CD14-positive monocyte (primary cell): ENCODE measurements at regions of chr20 and their contacts with region 1.

Region 1: DNA sequence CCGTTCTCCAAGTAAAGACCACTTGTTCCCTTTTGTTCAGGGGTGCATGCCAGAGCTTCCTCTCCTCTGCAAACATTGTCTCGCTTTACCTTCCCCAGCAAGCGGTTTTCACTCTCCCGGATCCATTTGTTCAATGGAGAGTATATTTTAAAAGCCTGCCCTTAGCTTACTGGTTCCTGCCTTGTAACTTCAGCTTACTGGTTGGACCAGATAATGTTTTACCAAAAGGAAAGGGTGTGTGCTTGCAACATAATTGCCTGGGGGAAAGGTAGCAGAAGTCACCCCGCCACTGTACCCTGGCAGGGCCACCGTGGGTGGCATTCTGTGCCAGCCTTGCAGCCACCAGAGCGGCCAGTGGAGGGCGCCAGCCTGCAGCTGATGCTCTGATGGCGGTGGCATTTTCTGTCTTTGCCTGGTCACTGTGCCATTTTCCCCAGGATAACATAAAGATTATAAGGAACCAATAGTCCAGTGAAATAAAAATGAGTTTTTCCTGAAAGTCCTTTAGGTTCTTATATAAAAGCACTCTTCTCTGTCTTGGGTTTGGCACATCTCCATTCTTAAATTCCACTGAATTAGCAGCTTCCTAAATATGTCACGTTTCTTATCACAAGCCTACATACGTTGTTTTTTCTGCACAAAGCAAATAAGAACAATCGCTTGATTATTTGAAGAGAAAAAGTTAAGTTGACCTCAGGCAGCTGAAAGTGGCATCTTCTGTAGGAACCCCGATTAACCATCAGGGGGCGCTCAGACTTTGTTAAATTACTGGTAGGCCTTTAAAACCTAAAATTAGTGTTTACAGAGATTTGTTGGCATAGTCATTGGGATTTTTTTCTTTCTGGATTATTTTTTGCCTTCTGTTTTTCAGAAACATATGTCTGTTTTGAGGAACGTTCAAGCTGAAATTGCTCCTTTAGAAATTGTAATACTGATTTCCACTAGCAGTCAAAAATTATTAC is 67.4 kb upstream of the XRN2 start:
- DNase-seq: peak; percentile 40 to 66 (median 52)
- H3K4me3 ChIP-seq: no peak overlapping the region
- H3K4me3 Mint-ChIP-seq: no peak overlapping the region
- H3K27ac ChIP-seq: no peak overlapping the region
- H3K27ac Mint-ChIP-seq: no peak overlapping the region
- H3K4me1 ChIP-seq: peaks cover 0 to 4% of the 10 kb centered on the region in 2 donors
- H3K4me1 Mint-ChIP-seq: peaks cover 6% of the 10 kb centered on the region
- H3K27me3 ChIP-seq: no peaks in the 10 kb centered on the region
- H3K27me3 Mint-ChIP-seq: peaks cover 0 to 9% (median 4%) of the 10 kb centered on the region in 3 donors
- CTCF ChIP-seq: peak; percentile 99

Region 2: GRCh38 chr20:20860078-20860806 is 375.5 kb before region 1 on chr20:
- intact Hi-C with region 1: loop called in 1 of 2 experiments (anchors 10 kb)
- DNase-seq: peak; percentile 66 to 80 (median 78)
- H3K4me3 ChIP-seq: no peak overlapping the region
- H3K4me3 Mint-ChIP-seq: peak overlapping the region in 1 of 2 donors; percentile 4
- H3K27ac ChIP-seq: no peak overlapping the region
- H3K27ac Mint-ChIP-seq: no peak overlapping the region
- H3K4me1 ChIP-seq: peaks cover 8 to 9% of the 10 kb centered on the region in 2 donors
- H3K4me1 Mint-ChIP-seq: peaks cover 7% of the 10 kb centered on the region
- H3K27me3 ChIP-seq: peaks cover 0 to 3% of the 10 kb centered on the region in 2 donors
- H3K27me3 Mint-ChIP-seq: peaks cover 11 to 16% (median 13%) of the 10 kb centered on the region in 3 donors
- CTCF ChIP-seq: peak; percentile 96

Region 3: GRCh38 chr20:21251278-21251677 is 15.5 kb after region 1 on chr20:
- intact Hi-C with region 1: no loop called
- DNase-seq: no peak
- H3K4me3 ChIP-seq: no peak overlapping the region
- H3K4me3 Mint-ChIP-seq: no peak overlapping the region
- H3K27ac ChIP-seq: no peak overlapping the region
- H3K27ac Mint-ChIP-seq: peak overlapping the region in 1 of 7 donors; percentile 15
- H3K4me1 ChIP-seq: no peaks in the 10 kb centered on the region
- H3K4me1 Mint-ChIP-seq: peaks cover 3% of the 10 kb centered on the region
- H3K27me3 ChIP-seq: peaks cover 0 to 3% of the 10 kb centered on the region in 2 donors
- H3K27me3 Mint-ChIP-seq: peaks cover 4 to 10% (median 4%) of the 10 kb centered on the region in 3 donors
- CTCF ChIP-seq: no peak

Region 4: GRCh38 chr20:21262812-21263211 is 27.0 kb after region 1 on chr20:
- intact Hi-C with region 1: no loop called
- DNase-seq: no peak
- H3K4me3 ChIP-seq: no peak overlapping the region
- H3K4me3 Mint-ChIP-seq: no peak overlapping the region
- H3K27ac ChIP-seq: no peak overlapping the region
- H3K27ac Mint-ChIP-seq: no peak overlapping the region
- H3K4me1 ChIP-seq: no peaks in the 10 kb centered on the region
- H3K4me1 Mint-ChIP-seq: no peaks in the 10 kb centered on the region
- H3K27me3 ChIP-seq: no peaks in the 10 kb centered on the region
- H3K27me3 Mint-ChIP-seq: peaks cover 2 to 16% (median 5%) of the 10 kb centered on the region in 3 donors
- CTCF ChIP-seq: no peak

Region 5: DNA sequence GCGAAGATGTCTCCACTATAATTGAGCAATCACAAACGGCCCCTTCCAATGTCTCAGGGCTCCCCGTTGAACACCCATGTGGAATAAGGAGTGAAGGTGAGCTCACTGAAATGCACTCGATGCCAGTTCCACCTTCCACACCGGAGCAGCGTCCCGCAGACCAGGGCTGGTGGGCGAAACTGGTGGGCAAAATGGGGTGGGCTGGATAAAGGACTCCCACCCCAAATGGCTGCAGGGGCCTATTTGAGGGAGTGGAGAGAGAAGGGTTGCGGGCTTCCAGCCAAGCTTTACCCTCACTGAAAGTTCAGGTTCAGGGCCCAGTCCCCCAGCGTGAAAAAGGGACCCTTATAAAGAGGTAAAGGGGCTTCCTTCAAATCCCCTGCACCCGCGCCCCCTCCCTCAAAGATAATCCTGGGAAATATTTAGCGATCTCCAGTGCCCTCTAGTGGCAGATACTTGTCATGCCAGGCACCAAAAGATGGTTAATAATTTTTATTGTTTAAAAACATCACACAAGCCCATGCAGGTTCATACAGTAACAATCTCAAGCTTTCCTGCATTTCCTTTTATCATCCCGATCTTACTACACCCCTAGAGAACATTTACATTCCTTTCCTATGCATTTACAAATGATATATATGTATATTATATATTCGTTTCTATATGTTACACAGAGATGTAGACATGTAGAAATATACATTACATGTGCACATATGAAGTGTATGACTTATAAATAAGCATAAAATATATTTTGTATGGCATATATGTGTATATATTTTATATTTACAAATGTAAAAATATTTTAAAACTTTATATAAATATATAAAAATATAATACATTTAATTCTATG is 336.3 kb after region 1 on chr20:
- intact Hi-C with region 1: loop called in 1 of 2 experiments (anchors 5 kb)
- DNase-seq: peak in 2 of 3 donors; percentile 6
- H3K4me3 ChIP-seq: peak overlapping the region in 1 of 3 experiments; percentile 15
- H3K4me3 Mint-ChIP-seq: no peak overlapping the region
- H3K27ac ChIP-seq: no peak overlapping the region
- H3K27ac Mint-ChIP-seq: no peak overlapping the region
- H3K4me1 ChIP-seq: peaks cover 15 to 17% of the 10 kb centered on the region in 2 donors
- H3K4me1 Mint-ChIP-seq: peaks cover 14% of the 10 kb centered on the region
- H3K27me3 ChIP-seq: peaks cover 12 to 29% of the 10 kb centered on the region in 2 donors
- H3K27me3 Mint-ChIP-seq: peaks cover 15 to 40% (median 34%) of the 10 kb centered on the region in 3 donors
- CTCF ChIP-seq: peak; percentile 95